Heart right ventricle (tissue), 16 donors: ENCODE measurements at regions of chr5 and their contacts with region 1.

Region 1: GRCh38 chr5:159645179-159645846 is 271.0 kb upstream of the ADRA1B start:
- DNase-seq: no peak
- ATAC-seq: peak in 3 of 8 donors; percentile 37 to 65 (median 44)
- H3K4me3 ChIP-seq: no peak overlapping the region
- H3K27ac ChIP-seq: peak overlapping the region in 2 of 10 donors; percentile 1 to 17
- H3K4me1 ChIP-seq: peaks cover 0 to 17% (median 0%) of the 10 kb centered on the region in 9 donors
- H3K27me3 ChIP-seq: no peaks in the 10 kb centered on the region
- CTCF ChIP-seq: no peak

Region 2: GRCh38 chr5:158660726-158661125 is 984.6 kb before region 1 on chr5:
- intact Hi-C with region 1: loop called in 1 of 10 experiments (anchors 5 kb)
- DNase-seq: no peak
- ATAC-seq: no peak
- H3K4me3 ChIP-seq: no peak overlapping the region
- H3K27ac ChIP-seq: no peak overlapping the region
- H3K4me1 ChIP-seq: no peaks in the 10 kb centered on the region
- H3K27me3 ChIP-seq: no peaks in the 10 kb centered on the region
- CTCF ChIP-seq: no peak

Region 3: GRCh38 chr5:159163027-159163700 is 482.1 kb before region 1 on chr5:
- intact Hi-C with region 1: no loop called
- DNase-seq: no peak
- ATAC-seq: no peak
- H3K4me3 ChIP-seq: no peak overlapping the region
- H3K27ac ChIP-seq: no peak overlapping the region
- H3K4me1 ChIP-seq: peaks cover 0 to 10% (median 2%) of the 10 kb centered on the region in 9 donors
- H3K27me3 ChIP-seq: no peaks in the 10 kb centered on the region
- CTCF ChIP-seq: no peak

Region 4: DNA sequence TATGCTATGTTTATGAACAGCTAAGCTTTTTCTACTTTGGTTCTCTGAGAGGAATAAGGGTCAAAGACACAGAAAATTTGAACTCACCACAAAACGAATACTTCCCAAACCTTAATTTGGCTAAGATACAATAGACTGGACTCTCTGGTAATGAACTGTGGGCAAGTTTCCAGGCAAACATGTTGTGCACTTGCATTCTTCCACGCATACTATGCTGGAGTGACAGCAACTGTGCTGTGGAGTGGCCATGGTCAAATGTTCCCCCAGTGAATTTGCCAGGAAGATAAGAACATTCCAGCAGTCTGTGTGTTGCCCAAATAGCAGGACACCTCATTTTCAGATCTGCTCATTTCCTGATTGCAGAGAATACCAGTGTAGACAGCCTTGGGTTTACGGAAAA is 39.7 kb before region 1 on chr5:
- intact Hi-C with region 1: loop called in 2 of 10 experiments (anchors 5 kb)
- DNase-seq: peak in 1 of 2 donors; percentile 78
- ATAC-seq: peak; percentile 84 to 99 (median 96)
- H3K4me3 ChIP-seq: no peak overlapping the region
- H3K27ac ChIP-seq: peak overlapping the region in 9 of 10 donors; percentile 1 to 85 (median 65)
- H3K4me1 ChIP-seq: peaks cover 0 to 21% (median 13%) of the 10 kb centered on the region in 9 donors
- H3K27me3 ChIP-seq: no peaks in the 10 kb centered on the region
- CTCF ChIP-seq: no peak

Region 5: GRCh38 chr5:159616952-159617351 is 28.4 kb before region 1 on chr5:
- intact Hi-C with region 1: no loop called
- DNase-seq: no peak
- ATAC-seq: peak in 1 of 8 donors; percentile 39
- H3K4me3 ChIP-seq: no peak overlapping the region
- H3K27ac ChIP-seq: no peak overlapping the region
- H3K4me1 ChIP-seq: peaks cover 0 to 10% (median 0%) of the 10 kb centered on the region in 9 donors
- H3K27me3 ChIP-seq: no peaks in the 10 kb centered on the region
- CTCF ChIP-seq: no peak

Region 6: DNA sequence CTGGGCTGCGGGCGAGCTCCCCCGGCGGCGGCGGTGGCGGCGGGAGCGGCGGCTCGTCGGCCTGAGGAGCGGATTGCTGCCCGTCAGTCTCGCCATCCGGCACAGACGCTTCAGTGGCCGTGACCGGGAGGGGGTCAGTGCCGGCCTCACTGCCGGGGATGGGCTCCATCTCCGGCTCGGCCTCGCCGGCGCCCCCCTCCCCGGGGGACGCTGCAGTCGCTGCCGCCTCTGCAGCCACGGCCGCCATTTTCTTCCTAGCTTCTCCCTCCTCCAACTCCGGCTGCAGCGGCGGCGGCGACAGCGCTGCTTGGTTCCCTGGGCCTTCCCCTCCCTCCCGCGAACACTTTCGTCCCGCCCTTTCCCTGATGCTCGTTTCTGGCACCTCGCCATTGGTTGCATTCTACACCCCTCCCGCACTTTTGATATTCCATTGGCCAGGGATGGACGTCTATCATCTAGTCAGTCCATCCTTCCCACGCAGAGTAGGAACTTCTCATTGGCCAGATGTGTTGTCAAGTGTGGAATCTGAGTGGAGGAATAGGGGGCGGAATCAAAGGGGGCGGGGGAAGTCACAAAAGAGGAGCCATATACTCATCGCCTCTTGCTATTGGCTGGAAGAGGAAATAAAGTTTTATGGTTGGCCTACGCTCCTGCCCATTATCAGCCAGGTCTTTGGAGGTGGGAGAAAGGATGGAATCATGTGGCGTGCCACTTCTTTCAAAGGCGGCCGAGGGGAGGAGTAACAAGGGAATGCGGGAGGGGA is 474.0 kb after region 1 on chr5 and contains the start of gene PWWP2A:
- intact Hi-C with region 1: no loop called
- DNase-seq: peak; percentile 97 to 100
- ATAC-seq: peak; percentile 96 to 99 (median 98)
- H3K4me3 ChIP-seq: peak within 1 kb of the TSS; percentile 65 to 100 (median 97)
- H3K27ac ChIP-seq: peak within 1 kb of the TSS; percentile 85 to 99 (median 98)
- H3K4me1 ChIP-seq: peaks cover 0 to 23% (median 15%) of the 10 kb centered on the region in 9 donors
- H3K27me3 ChIP-seq: no peaks in the 10 kb centered on the region
- CTCF ChIP-seq: peak in 4 of 9 donors; percentile 35 to 45 (median 38)
- total RNA-seq, gene PWWP2A: 8.2 to 14.7 (median 12.4) TPM